ENCODE measurements at regions of chr12 and their contacts with region 1.

Region 1: GRCh38 chr12:88993651-88994050 is 358.6 kb downstream of the DUSP6 start:
- DNase-seq: peak; percentile 29
- H3K4me3 ChIP-seq: no peak overlapping the region
- CTCF ChIP-seq: peak; percentile 30

Region 2: GRCh38 chr12:88153959-88154358 is 839.7 kb before region 1 on chr12:
- CTCF ChIA-PET with region 1: interaction called, 34 read pairs
- POLR2A ChIA-PET with region 1: no interaction called
- DNase-seq: no peak
- H3K4me3 ChIP-seq: no peak overlapping the region
- CTCF ChIP-seq: no peak

Region 3: GRCh38 chr12:88580051-88580871 is 413.4 kb before region 1 on chr12 and contains the start of gene KITLG:
- CTCF ChIA-PET with region 1: interaction called, 34 read pairs
- POLR2A ChIA-PET with region 1: interaction called, 7 read pairs
- DNase-seq: no peak
- H3K4me3 ChIP-seq: peak within 1 kb of the TSS; percentile 84
- CTCF ChIP-seq: peak; percentile 48

Region 4: GRCh38 chr12:88633312-88633711 is 360.3 kb before region 1 on chr12:
- CTCF ChIA-PET with region 1: interaction called, 22 read pairs
- POLR2A ChIA-PET with region 1: no interaction called
- DNase-seq: no peak
- H3K4me3 ChIP-seq: no peak overlapping the region
- CTCF ChIP-seq: peak; percentile 4

Region 5: GRCh38 chr12:88638966-88639760 is 354.5 kb before region 1 on chr12:
- CTCF ChIA-PET with region 1: interaction called, 22 read pairs
- POLR2A ChIA-PET with region 1: no interaction called
- DNase-seq: no peak
- H3K4me3 ChIP-seq: no peak overlapping the region
- CTCF ChIP-seq: no peak

Region 6: GRCh38 chr12:88982694-88983093 is 11.0 kb before region 1 on chr12:
- CTCF ChIA-PET with region 1: interaction called, 13 read pairs
- POLR2A ChIA-PET with region 1: no interaction called
- DNase-seq: no peak
- H3K4me3 ChIP-seq: no peak overlapping the region
- CTCF ChIP-seq: no peak